Activated CD8-positive, alpha-beta T cell treated with anti-CD3 and anti-CD28 coated beads, Interleukin-2, amount 10 ng/mL, durations not matched to agents 7 days and 5 days (primary cell): ENCODE measurements at regions of chr3 and their contacts with region 1.

Region 1: DNA sequence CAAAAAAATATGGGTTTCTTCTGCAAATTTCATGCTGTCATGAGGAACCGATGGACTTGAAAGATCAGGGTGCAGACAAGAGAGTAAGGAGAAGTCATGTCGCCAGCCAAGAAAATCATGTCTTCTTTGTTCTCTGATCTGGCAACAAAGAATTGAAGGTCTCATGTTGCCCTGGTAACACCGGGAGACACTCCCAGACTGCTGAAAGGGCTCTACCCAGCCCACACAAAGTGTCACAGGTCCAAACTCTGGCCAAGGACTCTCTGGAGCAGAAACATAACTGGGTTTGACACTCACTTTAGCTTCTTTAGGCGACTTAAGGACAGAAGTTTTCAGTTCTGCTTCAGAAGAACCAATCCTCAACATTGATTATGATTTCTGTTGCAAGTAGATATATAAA is 42.9 kb downstream of the SIDT1 start:
- DNase-seq: no peak
- ATAC-seq: no peak
- H3K4me3 Mint-ChIP-seq: no peak overlapping the region
- H3K27ac Mint-ChIP-seq: no peak overlapping the region
- H3K4me1 Mint-ChIP-seq: peaks cover 8% of the 10 kb centered on the region
- H3K27me3 Mint-ChIP-seq: no peaks in the 10 kb centered on the region

Region 2: DNA sequence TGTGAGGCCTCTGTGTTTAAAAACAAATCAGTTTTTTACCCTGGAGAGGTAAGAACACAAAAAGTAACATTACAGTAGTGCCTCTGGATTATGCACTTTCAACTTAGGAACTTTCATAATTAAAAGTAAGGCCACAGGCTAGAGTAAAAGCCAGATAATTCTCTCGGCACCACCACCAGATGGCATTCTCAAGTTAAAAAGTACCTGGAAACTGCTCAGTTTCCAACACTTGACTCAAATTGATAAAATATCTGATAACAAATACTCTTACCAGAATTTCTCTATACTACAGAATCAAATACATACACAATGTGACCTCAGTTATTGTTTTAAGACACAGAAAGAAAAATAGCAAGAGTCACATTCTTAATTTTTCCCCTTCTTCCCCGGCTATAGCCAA is 80.2 kb before region 1 on chr3:
- CTCF ChIA-PET with region 1: interaction called, 96 read pairs
- POLR2A ChIA-PET with region 1: no interaction called
- DNase-seq: peak; percentile 58
- ATAC-seq: peak; percentile 67
- H3K4me3 Mint-ChIP-seq: no peak overlapping the region
- H3K27ac Mint-ChIP-seq: no peak overlapping the region
- H3K4me1 Mint-ChIP-seq: peaks cover 5% of the 10 kb centered on the region
- H3K27me3 Mint-ChIP-seq: no peaks in the 10 kb centered on the region

Region 3: GRCh38 chr3:113514265-113514769 is 60.9 kb before region 1 on chr3:
- CTCF ChIA-PET with region 1: interaction called, 28 read pairs
- POLR2A ChIA-PET with region 1: no interaction called
- DNase-seq: no peak
- ATAC-seq: peak; percentile 5
- H3K4me3 Mint-ChIP-seq: no peak overlapping the region
- H3K27ac Mint-ChIP-seq: no peak overlapping the region
- H3K4me1 Mint-ChIP-seq: peaks cover 11% of the 10 kb centered on the region
- H3K27me3 Mint-ChIP-seq: peaks cover 16% of the 10 kb centered on the region

Region 4: GRCh38 chr3:113531826-113532697 is 43.1 kb before region 1 on chr3 and contains the start of gene SIDT1:
- CTCF ChIA-PET with region 1: interaction called, 10 read pairs
- POLR2A ChIA-PET with region 1: interaction called, 3 read pairs
- DNase-seq: peak; percentile 86
- ATAC-seq: peak; percentile 83
- H3K4me3 Mint-ChIP-seq: peak within 1 kb of the TSS; percentile 92
- H3K27ac Mint-ChIP-seq: peak within 1 kb of the TSS; percentile 98
- H3K4me1 Mint-ChIP-seq: peaks cover 49% of the 10 kb centered on the region
- H3K27me3 Mint-ChIP-seq: peaks cover 3% of the 10 kb centered on the region
- total RNA-seq, gene SIDT1: 34.8 to 35.0 TPM

Region 5: DNA sequence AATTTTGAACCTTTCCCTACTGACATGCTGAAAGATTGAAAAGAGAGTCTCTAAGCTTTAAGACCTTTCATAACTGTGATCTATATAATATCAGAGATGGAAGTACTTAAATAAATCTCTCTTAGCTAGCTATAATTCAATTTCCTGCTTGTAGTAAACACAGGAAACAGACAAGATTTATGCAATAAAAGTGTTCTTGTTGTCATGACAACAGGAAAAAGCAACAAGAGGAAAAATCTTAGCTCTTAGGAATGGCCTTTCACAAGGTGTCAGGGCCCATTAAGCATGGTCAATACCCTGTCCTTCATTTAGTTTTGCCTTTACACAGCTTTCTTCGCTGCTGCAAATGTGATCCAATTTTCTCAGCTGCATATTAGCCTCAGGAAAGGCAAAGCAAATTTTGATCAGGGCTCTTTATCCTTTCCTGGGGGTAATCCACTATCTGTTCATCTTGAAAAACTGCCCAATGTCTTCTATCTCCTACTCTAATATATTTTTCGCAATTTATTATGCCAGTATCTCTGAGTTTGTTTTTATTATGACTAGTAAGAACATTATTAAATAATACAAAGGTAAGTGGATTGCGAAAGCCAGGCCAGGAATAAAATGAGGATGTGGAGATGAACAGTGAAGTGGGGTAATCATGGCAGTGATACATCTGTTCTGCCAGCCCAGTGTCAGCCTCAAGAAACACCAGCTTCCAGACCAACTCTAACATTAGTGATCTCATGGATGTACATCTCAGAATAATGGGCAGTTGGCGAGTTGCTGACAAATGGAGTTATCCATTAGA is 14.2 kb before region 1 on chr3:
- CTCF ChIA-PET with region 1: interaction called, 19 read pairs
- POLR2A ChIA-PET with region 1: no interaction called
- DNase-seq: no peak
- ATAC-seq: no peak
- H3K4me3 Mint-ChIP-seq: no peak overlapping the region
- H3K27ac Mint-ChIP-seq: no peak overlapping the region
- H3K4me1 Mint-ChIP-seq: peaks cover 8% of the 10 kb centered on the region
- H3K27me3 Mint-ChIP-seq: no peaks in the 10 kb centered on the region

Region 6: DNA sequence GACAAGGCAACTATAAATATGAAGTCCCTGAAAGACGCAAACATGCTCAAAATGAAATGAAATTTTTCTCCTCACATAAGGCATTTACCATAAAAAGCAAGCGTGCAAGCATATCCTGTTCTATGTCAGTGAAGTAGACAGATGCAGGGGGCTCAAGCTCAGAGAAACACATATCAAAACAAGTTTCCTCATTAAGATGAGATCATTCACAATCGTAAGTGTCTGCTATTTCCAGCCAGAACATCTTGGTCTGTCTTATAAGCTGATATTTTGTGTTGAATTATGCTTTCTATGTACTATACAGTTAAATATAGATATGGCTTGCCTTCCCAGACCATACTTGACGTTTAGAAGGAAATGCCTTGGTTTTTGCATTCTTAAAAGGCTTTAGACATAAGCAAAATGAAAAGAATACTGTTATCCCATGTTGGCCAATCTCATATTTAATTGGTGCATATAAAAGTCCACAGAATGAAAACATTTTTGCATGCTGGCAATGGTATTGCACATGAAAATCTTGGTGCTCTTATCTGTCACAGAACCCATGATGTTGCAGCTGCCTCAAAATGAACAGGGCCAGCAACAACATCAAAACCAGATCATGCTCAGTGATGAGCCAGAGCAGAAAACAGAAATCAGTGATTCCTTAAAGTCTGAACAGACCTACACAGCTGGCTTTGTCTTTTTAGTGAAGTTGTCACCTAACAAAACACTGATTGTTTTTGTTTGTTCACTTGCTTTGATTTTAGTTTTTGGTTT is 22.6 kb after region 1 on chr3:
- CTCF ChIA-PET with region 1: interaction called, 18 read pairs
- POLR2A ChIA-PET with region 1: no interaction called
- DNase-seq: no peak
- ATAC-seq: no peak
- H3K4me3 Mint-ChIP-seq: no peak overlapping the region
- H3K27ac Mint-ChIP-seq: no peak overlapping the region
- H3K4me1 Mint-ChIP-seq: no peaks in the 10 kb centered on the region
- H3K27me3 Mint-ChIP-seq: no peaks in the 10 kb centered on the region

Region 7: DNA sequence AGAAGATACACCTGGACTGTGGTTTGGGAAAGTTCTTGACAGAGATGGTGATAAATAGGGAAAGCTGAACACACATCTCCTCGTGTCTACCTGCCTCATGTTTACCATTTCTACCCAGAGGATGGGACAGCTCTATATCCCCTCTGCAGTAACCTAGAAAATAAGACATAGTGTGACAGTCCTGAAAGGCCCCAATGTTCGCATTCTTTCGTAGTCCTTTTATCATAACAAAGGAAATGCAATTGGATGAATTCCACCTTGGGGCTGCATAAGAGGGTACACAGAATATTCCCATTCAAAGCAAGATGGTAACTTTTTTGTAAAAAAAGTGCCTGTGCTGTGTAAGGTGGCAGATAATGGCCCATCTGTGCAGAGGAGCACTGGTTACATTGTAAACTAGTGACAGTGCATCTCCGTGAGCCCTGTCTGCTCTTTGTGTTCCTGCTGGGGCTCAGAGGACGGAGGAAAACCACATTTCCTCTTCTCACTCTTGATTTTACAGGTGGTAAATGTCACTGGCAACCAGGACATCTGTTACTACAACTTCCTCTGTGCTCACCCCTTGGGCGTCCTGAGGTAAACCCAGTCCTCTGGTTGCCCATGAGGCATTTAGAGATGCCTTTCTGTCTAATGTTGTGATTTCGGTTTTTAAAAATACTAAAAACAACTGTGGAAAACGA is 31.5 kb after region 1 on chr3:
- CTCF ChIA-PET with region 1: interaction called, 12 read pairs
- POLR2A ChIA-PET with region 1: no interaction called
- DNase-seq: peak; percentile 79
- ATAC-seq: peak; percentile 98
- H3K4me3 Mint-ChIP-seq: peak overlapping the region; percentile 9
- H3K27ac Mint-ChIP-seq: peak overlapping the region; percentile 74
- H3K4me1 Mint-ChIP-seq: peaks cover 35% of the 10 kb centered on the region
- H3K27me3 Mint-ChIP-seq: no peaks in the 10 kb centered on the region